HEK293 (cell line): ENCODE measurements at regions of chr12 and their contacts with region 1.

Region 1: GRCh38 chr12:85468356-85469157 is 188.5 kb downstream of the ALX1 start:
- H3K4me3 ChIP-seq: peak overlapping the region; percentile 20
- H3K27ac ChIP-seq: no peak overlapping the region
- H3K4me1 ChIP-seq: 0 out of 2 replicates have a peak, but pooled peaks cover 2% of the 10 kb centered on the region
- CTCF ChIP-seq: peak; percentile 67; the same call in 1 of the 2 replicates

Region 2: DNA sequence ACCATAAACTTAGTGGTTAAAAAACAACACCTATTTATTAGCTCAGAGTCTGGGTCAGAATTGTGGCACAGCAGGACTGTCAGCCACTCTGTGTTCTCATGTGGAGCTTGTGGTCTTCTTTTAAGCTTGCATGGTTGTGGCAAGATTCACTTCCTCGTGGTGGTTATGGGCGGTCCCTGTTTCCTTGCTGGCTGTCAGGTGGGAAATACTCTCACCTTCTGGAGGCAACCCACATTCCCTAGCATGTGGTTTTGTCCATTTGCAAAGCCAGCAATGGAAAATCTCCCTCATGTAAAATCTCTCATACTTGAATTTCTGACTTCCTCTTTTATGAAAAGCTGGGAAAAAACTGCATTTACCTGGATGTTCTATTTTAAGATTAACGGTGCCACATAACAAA is 41.3 kb after region 1 on chr12:
- CTCF ChIA-PET with region 1: no interaction called
- POLR2A ChIA-PET with region 1: no interaction called
- H3K4me3 ChIP-seq: no peak overlapping the region
- H3K27ac ChIP-seq: no peak overlapping the region
- H3K4me1 ChIP-seq: no peaks in the 10 kb centered on the region
- CTCF ChIP-seq: no peak

Region 3: GRCh38 chr12:85872497-85873091 is 404.0 kb after region 1 on chr12:
- CTCF ChIA-PET with region 1: interaction called, 34 read pairs
- POLR2A ChIA-PET with region 1: no interaction called
- H3K4me3 ChIP-seq: no peak overlapping the region
- H3K27ac ChIP-seq: no peak overlapping the region
- H3K4me1 ChIP-seq: no peaks in the 10 kb centered on the region
- CTCF ChIP-seq: peak; percentile 23; the same call in 1 of the 2 replicates